ENCODE measurements at regions of chr15 and their contacts with region 1.

Region 1: GRCh38 chr15:49169880-49170597 is at the start of gene GALK2:
- DNase-seq: peak; percentile 69
- ATAC-seq: peak; percentile 88
- H3K4me3 ChIP-seq: peak within 1 kb of the TSS; percentile 69 to 93 (median 74)
- H3K4me3 Mint-ChIP-seq: peak within 1 kb of the TSS; percentile 98
- H3K27ac ChIP-seq: peak within 1 kb of the TSS; percentile 65 to 66
- H3K27ac Mint-ChIP-seq: peak within 1 kb of the TSS; percentile 95
- H3K4me1 ChIP-seq: peaks cover 9 to 10% of the 10 kb centered on the region in 2 donors
- H3K4me1 Mint-ChIP-seq: peaks cover 29% of the 10 kb centered on the region
- H3K27me3 ChIP-seq: no peaks in the 10 kb centered on the region
- H3K27me3 Mint-ChIP-seq: no peaks in the 10 kb centered on the region
- CTCF ChIP-seq: no peak
- total RNA-seq, gene GALK2: 23.1 and 24.8 TPM in 2 replicates

Region 2: GRCh38 chr15:48963524-48964113 is 206.4 kb before region 1 on chr15 and contains the start of gene SHC4:
- CTCF ChIA-PET with region 1: no interaction called
- POLR2A ChIA-PET with region 1: no interaction called
- intact Hi-C with region 1: no loop called
- DNase-seq: peak; percentile 10
- ATAC-seq: peak; percentile 39
- H3K4me3 ChIP-seq: peak within 1 kb of the TSS in 4 of 5 experiments; percentile 30 to 53 (median 40)
- H3K4me3 Mint-ChIP-seq: peak within 1 kb of the TSS; percentile 80
- H3K27ac ChIP-seq: no peak within 1 kb of the TSS
- H3K27ac Mint-ChIP-seq: no peak within 1 kb of the TSS
- H3K4me1 ChIP-seq: peaks cover 21 to 23% of the 10 kb centered on the region in 2 donors
- H3K4me1 Mint-ChIP-seq: peaks cover 19% of the 10 kb centered on the region
- H3K27me3 ChIP-seq: peaks cover 0 to 61% (median 26%) of the 10 kb centered on the region in 4 experiments
- H3K27me3 Mint-ChIP-seq: peaks cover 57% of the 10 kb centered on the region
- CTCF ChIP-seq: no peak
- total RNA-seq, gene SHC4: 0.69 and 0.75 TPM in 2 replicates

Region 3: GRCh38 chr15:49155110-49155833 is 14.8 kb before region 1 on chr15 and contains the start of gene COPS2:
- CTCF ChIA-PET with region 1: no interaction called
- POLR2A ChIA-PET with region 1: interaction called, 3 read pairs
- intact Hi-C with region 1: loop called (anchors 1 kb)
- DNase-seq: peak; percentile 97
- ATAC-seq: peak; percentile 93
- H3K4me3 ChIP-seq: peak within 1 kb of the TSS; percentile 80 to 99 (median 90)
- H3K4me3 Mint-ChIP-seq: peak within 1 kb of the TSS; percentile 98
- H3K27ac ChIP-seq: peak within 1 kb of the TSS; percentile 92 to 94
- H3K27ac Mint-ChIP-seq: peak within 1 kb of the TSS; percentile 96
- H3K4me1 ChIP-seq: peaks cover 11 to 25% of the 10 kb centered on the region in 2 donors
- H3K4me1 Mint-ChIP-seq: peaks cover 41% of the 10 kb centered on the region
- H3K27me3 ChIP-seq: no peaks in the 10 kb centered on the region
- H3K27me3 Mint-ChIP-seq: no peaks in the 10 kb centered on the region
- CTCF ChIP-seq: peak; percentile 9
- total RNA-seq, gene COPS2: 44.5 and 47.8 TPM in 2 replicates

Region 4: DNA sequence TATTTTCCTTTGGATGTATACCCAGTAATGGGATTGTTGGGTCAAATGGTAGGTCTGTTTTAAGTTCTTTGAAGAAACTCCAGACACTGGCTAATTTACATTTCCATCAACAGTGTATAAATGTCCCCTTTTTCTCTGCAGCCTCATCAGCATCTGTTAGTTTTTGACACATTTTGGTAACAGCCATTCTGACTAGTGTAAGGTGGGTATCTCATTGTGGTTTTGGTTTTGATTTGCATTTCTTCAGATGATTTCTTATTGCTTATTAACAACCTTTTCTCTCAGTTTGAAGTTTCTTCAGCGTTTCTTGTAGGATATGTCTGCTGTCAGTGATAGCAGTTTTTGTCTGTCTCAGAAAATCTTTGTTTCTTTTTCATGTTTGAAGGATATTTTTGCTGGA is 15.4 kb after region 1 on chr15:
- CTCF ChIA-PET with region 1: no interaction called
- POLR2A ChIA-PET with region 1: interaction called, 10 read pairs
- intact Hi-C with region 1: no loop called
- DNase-seq: no peak
- ATAC-seq: no peak
- H3K4me3 ChIP-seq: no peak overlapping the region
- H3K4me3 Mint-ChIP-seq: no peak overlapping the region
- H3K27ac ChIP-seq: no peak overlapping the region
- H3K27ac Mint-ChIP-seq: no peak overlapping the region
- H3K4me1 ChIP-seq: peaks cover under 1 to 2% of the 10 kb centered on the region in 2 donors
- H3K4me1 Mint-ChIP-seq: peaks cover 11% of the 10 kb centered on the region
- H3K27me3 ChIP-seq: no peaks in the 10 kb centered on the region
- H3K27me3 Mint-ChIP-seq: no peaks in the 10 kb centered on the region
- CTCF ChIP-seq: no peak